WTC11 (cell line): ENCODE measurements at regions of chr9 and their contacts with region 1.

Region 1: DNA sequence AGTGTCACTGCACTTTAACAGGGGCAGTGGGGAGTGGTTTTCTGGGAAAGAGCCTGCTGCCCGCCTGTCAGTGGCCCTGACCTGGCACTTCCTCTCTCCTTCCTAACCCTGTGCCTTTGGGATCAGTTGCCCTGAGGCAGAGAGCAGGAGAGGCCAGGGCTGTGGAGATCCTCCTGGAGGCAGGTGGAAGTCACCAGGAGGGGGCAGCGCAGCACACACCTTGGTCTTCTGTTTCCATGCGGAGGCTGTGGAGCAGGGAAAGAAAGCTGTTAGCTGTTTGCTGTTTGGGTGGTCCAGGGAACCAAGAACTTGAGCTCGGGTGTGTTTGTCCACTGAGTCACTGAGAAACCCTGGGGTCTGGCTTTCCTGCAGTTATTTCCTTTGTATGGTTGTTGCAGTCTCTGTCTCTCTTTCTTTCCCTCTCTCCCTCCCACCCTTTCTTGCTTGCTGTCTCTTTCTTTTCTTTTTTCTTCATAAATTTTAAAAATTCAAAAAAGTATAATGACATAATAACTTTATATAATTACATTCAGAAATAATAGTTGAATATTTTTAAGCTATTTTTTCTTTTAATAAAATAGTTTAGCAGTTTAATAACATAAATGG is 28.1 kb downstream of the NTRK2 start:
- DNase-seq: peak; percentile 92
- ATAC-seq: peak; percentile 97
- H3K4me3 Mint-ChIP-seq: no peak overlapping the region
- H3K27ac Mint-ChIP-seq: no peak overlapping the region
- H3K4me1 Mint-ChIP-seq: peaks cover 14% of the 10 kb centered on the region
- H3K27me3 Mint-ChIP-seq: no peaks in the 10 kb centered on the region
- CTCF ChIP-seq: peak; percentile 70

Region 2: DNA sequence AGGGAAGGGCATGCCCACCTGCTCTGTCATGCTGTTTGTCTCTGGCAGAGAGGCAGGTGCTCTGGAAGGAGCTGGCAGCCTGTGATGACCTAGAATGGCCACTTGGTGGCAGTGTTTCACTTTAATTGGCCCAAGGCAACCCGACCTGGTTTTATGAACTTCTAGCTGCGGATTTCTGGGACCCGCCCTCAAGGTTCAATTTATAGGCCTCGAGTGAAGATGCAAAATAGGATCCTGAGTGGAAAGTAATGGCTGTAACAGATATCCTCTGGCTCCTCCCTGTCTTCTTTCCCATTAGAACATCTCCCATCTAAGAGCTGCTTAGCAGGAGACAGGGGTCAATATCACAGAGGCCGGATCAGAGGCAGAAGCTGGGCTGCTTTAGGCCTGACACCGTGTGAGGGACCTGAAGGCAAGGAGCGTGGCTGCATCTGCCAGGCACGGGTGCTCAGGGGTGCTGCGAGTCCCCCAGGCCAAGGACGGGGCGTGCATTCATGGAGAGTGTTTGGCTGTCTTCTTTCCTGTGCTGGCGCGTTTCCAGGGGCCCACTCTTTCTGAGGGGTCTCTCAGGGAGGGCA is 300.4 kb before region 1 on chr9:
- CTCF ChIA-PET with region 1: interaction called, 13 read pairs
- POLR2A ChIA-PET with region 1: no interaction called
- DNase-seq: peak; percentile 77
- ATAC-seq: peak; percentile 90
- H3K4me3 Mint-ChIP-seq: no peak overlapping the region
- H3K27ac Mint-ChIP-seq: no peak overlapping the region
- H3K4me1 Mint-ChIP-seq: no peaks in the 10 kb centered on the region
- H3K27me3 Mint-ChIP-seq: no peaks in the 10 kb centered on the region; the same call in 1 of the 2 replicates
- CTCF ChIP-seq: peak; percentile 76

Region 3: GRCh38 chr9:84542554-84542953 is 155.1 kb before region 1 on chr9:
- CTCF ChIA-PET with region 1: no interaction called
- POLR2A ChIA-PET with region 1: no interaction called
- DNase-seq: no peak
- ATAC-seq: no peak
- H3K4me3 Mint-ChIP-seq: no peak overlapping the region
- H3K27ac Mint-ChIP-seq: no peak overlapping the region
- H3K4me1 Mint-ChIP-seq: peaks cover 15% of the 10 kb centered on the region
- H3K27me3 Mint-ChIP-seq: no peaks in the 10 kb centered on the region
- CTCF ChIP-seq: no peak

Region 4: GRCh38 chr9:84668196-84669012 is 29.2 kb before region 1 on chr9:
- CTCF ChIA-PET with region 1: interaction called, 27 read pairs
- POLR2A ChIA-PET with region 1: no interaction called
- DNase-seq: peak; percentile 84
- ATAC-seq: peak; percentile 76
- H3K4me3 Mint-ChIP-seq: peak overlapping the region; percentile 74
- H3K27ac Mint-ChIP-seq: no peak overlapping the region
- H3K4me1 Mint-ChIP-seq: peaks cover 16% of the 10 kb centered on the region
- H3K27me3 Mint-ChIP-seq: peaks cover 85% of the 10 kb centered on the region
- CTCF ChIP-seq: peak; percentile 58

Region 5: DNA sequence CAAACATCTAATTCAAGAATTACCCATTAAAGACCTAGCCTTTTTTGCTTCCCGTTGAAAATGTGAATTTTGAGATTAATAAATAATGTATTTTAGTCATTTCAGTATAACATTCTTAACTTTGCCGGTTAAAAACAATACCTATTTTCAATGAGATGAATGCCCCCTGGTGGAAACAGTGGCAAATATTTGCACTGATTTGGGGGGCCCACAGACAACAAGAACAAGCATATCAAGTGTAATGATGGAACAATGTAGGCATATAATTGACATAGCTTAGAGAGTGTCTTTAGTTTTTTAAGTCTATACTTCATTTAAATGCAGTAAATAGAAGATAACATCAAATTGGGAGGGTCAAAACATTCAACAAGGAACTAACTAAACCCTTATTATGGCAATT is 83.8 kb after region 1 on chr9:
- CTCF ChIA-PET with region 1: interaction called, 17 read pairs
- POLR2A ChIA-PET with region 1: no interaction called
- DNase-seq: peak; percentile 19
- ATAC-seq: no peak
- H3K4me3 Mint-ChIP-seq: no peak overlapping the region
- H3K27ac Mint-ChIP-seq: no peak overlapping the region
- H3K4me1 Mint-ChIP-seq: no peaks in the 10 kb centered on the region
- H3K27me3 Mint-ChIP-seq: no peaks in the 10 kb centered on the region
- CTCF ChIP-seq: peak; percentile 29; the same call in 1 of the 2 replicates

Region 6: GRCh38 chr9:84794981-84795637 is 97.5 kb after region 1 on chr9:
- CTCF ChIA-PET with region 1: no interaction called
- POLR2A ChIA-PET with region 1: no interaction called
- DNase-seq: no peak
- ATAC-seq: no peak
- H3K4me3 Mint-ChIP-seq: no peak overlapping the region
- H3K27ac Mint-ChIP-seq: no peak overlapping the region
- H3K4me1 Mint-ChIP-seq: no peaks in the 10 kb centered on the region
- H3K27me3 Mint-ChIP-seq: no peaks in the 10 kb centered on the region
- CTCF ChIP-seq: no peak

Region 7: GRCh38 chr9:84966876-84967833 is 269.5 kb after region 1 on chr9:
- CTCF ChIA-PET with region 1: interaction called, 24 read pairs
- POLR2A ChIA-PET with region 1: no interaction called
- DNase-seq: peak; percentile 80
- ATAC-seq: peak; percentile 100
- H3K4me3 Mint-ChIP-seq: no peak overlapping the region
- H3K27ac Mint-ChIP-seq: no peak overlapping the region
- H3K4me1 Mint-ChIP-seq: no peaks in the 10 kb centered on the region
- H3K27me3 Mint-ChIP-seq: peaks cover 4% of the 10 kb centered on the region
- CTCF ChIP-seq: peak; percentile 67

Region 8: DNA sequence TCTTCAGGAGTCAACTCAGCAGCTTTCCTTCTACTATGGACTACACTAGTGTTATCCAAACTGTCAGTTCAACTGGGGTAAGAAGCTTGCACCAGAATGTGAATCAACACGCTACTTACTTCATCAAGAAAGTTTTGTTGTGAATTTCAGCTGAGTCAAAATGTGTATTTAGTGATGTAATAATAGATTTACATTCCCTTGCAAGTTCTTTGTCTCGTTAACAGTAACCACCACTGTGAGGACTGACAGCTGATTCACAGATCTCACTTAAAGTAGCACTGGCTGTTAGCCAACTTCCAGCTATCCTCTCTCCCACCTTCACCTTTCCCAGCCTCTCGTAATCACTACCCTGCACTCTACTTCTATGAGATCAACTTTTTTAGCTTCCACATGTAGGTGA is 417.2 kb after region 1 on chr9:
- CTCF ChIA-PET with region 1: no interaction called
- POLR2A ChIA-PET with region 1: no interaction called
- DNase-seq: no peak
- ATAC-seq: no peak
- H3K4me3 Mint-ChIP-seq: no peak overlapping the region
- H3K27ac Mint-ChIP-seq: no peak overlapping the region
- H3K4me1 Mint-ChIP-seq: no peaks in the 10 kb centered on the region
- H3K27me3 Mint-ChIP-seq: no peaks in the 10 kb centered on the region
- CTCF ChIP-seq: no peak

Region 9: GRCh38 chr9:85258823-85259370 is 561.3 kb after region 1 on chr9:
- CTCF ChIA-PET with region 1: interaction called, 18 read pairs
- POLR2A ChIA-PET with region 1: no interaction called
- DNase-seq: peak; percentile 75
- ATAC-seq: peak; percentile 100
- H3K4me3 Mint-ChIP-seq: no peak overlapping the region
- H3K27ac Mint-ChIP-seq: no peak overlapping the region
- H3K4me1 Mint-ChIP-seq: peaks cover 5% of the 10 kb centered on the region
- H3K27me3 Mint-ChIP-seq: no peaks in the 10 kb centered on the region
- CTCF ChIP-seq: peak; percentile 61